ENCODE measurements at regions of chr16 and their contacts with region 1.

Region 1: DNA sequence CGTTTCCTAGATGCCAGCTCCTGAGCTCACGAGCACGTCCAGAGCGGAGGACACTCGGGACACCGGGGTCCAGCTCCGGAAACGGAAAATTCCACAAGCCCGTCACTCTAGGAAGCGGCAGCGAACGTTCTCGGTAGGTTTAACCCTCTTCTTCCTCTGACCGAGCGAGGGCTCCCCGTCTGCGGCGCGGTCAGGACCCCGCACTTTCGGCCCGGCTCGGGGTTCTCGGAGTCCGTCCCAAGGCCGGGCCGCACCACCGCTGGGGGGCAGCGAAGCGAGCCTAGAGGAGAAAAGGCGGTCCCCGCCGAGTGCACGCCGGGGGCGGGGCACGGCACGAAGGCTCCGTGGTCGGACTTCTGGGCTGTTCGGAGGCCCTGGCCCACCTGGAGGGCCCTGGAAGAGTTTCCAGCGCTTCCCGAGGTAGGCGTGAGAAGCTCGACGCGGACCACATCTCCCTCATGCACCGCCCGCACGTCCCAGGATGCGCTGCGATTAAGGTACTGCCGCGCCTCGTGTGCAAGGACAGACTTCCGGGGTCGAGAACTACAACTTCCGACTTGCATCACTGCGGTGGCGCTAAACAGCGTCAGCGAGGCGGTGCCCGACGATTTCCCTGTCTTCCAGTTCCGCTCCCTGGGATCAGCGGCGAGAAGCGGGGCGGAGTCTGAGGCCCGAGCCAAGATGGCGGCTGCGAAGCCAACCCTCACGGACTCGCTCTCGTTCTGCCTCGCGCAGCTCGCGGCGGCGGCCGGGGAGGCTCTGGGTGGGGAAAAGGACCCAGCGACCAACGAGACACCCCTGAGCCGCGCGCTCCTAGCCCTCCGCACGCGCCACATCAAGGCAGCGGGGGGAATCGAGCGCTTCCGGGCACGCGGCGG is at the start of gene ARMC5:
- DNase-seq: peak; percentile 90
- ATAC-seq: peak; percentile 80
- H3K4me3 ChIP-seq: peak within 1 kb of the TSS; percentile 95
- H3K27ac ChIP-seq: peak within 1 kb of the TSS; percentile 100
- H3K4me1 ChIP-seq: peaks cover 16% of the 10 kb centered on the region
- H3K27me3 ChIP-seq: no peaks in the 10 kb centered on the region
- CTCF ChIP-seq: peak; percentile 48 to 71 (median 67)
- EP300 ChIP-seq: 0 out of 4 replicates have a peak, but pooled peaks of 1 of the 2 experiments have one; percentile 9
- POLR2A ChIP-seq: peak; percentile 95
- RAD21 ChIP-seq: 0 out of 2 replicates have a peak, but pooled peaks have one; percentile 13
- polyA plus RNA-seq, gene ARMC5: 0.06 to 0.51 TPM

Region 2: DNA sequence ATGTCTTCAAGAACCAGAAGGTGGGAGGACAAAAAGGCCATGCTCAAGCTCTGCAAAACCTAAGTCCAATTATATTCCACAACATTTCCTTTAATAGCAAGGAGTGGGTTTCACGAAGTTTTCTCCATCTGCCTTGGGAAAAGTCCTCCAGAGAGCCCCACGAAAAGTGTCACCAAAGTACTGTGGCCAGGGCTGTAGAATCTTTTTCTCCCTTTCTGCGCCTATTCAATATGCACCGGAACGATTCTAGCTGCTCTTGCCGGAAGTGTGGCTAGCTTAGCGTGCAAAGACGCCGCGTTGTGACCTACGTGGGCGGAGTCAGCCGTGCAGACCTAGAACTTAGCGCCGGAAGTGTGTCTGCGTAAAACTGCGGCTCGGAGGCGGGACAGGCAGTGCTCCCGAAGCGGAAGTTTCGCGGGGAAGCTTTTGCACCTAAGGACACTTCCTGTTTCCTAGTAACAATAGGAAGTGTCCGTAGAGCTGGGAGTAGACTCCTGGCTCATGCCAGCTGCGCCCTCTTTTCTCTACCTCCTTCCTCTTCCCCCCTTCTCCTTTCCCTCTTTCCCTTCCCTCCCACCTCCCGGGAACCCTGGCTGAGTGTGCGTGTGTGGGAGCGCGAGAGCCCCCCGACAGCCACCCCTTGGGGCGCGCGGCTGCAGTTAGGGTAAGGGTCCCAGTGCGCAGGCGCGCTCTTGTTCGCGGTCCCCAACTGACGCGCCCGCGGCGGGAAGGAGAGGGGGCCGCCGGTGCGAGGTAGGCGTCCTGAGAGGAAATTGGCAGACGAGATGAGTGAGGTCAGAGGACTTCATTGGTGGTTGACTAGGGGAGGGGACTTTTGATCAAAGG is 384.9 kb before region 1 on chr16 and contains the starts of genes ZNF646 and ZNF668:
- CTCF ChIA-PET with region 1: interaction called, 10 read pairs
- POLR2A ChIA-PET with region 1: interaction called, 7 read pairs
- RAD21 ChIA-PET with region 1: interaction called, 6 read pairs
- SMC1A ChIA-PET with region 1: interaction called, 5 read pairs
- in situ Hi-C with region 1: no loop called
- intact Hi-C with region 1: no loop called
- DNase-seq: peak; percentile 96
- ATAC-seq: peak; percentile 84
- H3K4me3 ChIP-seq: peak within 1 kb of the TSS; percentile 86
- H3K27ac ChIP-seq: peak within 1 kb of the TSS; percentile 89
- H3K4me1 ChIP-seq: peaks cover 3% of the 10 kb centered on the region; the same call in 1 of the 2 replicates
- H3K27me3 ChIP-seq: no peaks in the 10 kb centered on the region
- CTCF ChIP-seq: no peak
- EP300 ChIP-seq: no peak
- POLR2A ChIP-seq: peak; percentile 87
- RAD21 ChIP-seq: no peak
- polyA plus RNA-seq, gene ZNF646: 0.10 to 0.26 TPM
- polyA plus RNA-seq, gene ZNF668: 0.05 TPM in 1 of 2 experiments, not detected in the other

Region 3: DNA sequence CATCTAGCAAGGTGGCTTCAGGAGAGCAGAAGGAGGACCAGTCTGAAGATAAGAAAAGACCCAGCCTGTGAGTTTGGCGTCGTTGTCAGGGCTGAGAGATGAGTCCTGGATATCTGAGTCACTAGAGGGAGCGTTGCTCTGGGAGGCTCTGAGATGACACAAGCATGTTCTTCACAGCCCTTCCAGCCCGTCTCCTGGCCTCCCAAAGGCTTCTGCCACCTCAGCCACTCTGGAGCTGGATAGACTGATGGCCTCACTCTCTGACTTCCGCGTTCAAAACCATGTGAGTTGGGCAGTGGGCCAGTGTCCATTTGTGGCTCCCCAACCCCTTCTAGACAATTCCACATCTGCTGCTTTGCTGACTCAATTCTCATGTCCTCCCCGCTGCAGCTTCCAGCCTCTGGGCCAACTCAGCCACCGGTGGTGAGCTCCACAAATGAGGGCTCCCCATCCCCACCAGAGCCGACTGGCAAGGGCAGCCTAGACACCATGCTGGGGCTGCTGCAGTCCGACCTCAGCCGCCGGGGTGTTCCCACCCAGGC is 15.2 kb after region 1 on chr16:
- CTCF ChIA-PET with region 1: interaction called, 13 read pairs
- POLR2A ChIA-PET with region 1: no interaction called
- RAD21 ChIA-PET with region 1: no interaction called
- SMC1A ChIA-PET with region 1: interaction called, 3 read pairs
- in situ Hi-C with region 1: no loop called
- intact Hi-C with region 1: no loop called
- DNase-seq: no peak
- ATAC-seq: no peak
- H3K4me3 ChIP-seq: no peak overlapping the region
- H3K27ac ChIP-seq: no peak overlapping the region
- H3K4me1 ChIP-seq: peaks cover 7% of the 10 kb centered on the region; the same call in 1 of the 2 replicates
- H3K27me3 ChIP-seq: peaks cover 0 to 9% of the 10 kb centered on the region in 2 experiments; a peak in 3 of 4 replicates
- CTCF ChIP-seq: no peak
- EP300 ChIP-seq: no peak
- POLR2A ChIP-seq: no peak
- RAD21 ChIP-seq: no peak

Region 4: DNA sequence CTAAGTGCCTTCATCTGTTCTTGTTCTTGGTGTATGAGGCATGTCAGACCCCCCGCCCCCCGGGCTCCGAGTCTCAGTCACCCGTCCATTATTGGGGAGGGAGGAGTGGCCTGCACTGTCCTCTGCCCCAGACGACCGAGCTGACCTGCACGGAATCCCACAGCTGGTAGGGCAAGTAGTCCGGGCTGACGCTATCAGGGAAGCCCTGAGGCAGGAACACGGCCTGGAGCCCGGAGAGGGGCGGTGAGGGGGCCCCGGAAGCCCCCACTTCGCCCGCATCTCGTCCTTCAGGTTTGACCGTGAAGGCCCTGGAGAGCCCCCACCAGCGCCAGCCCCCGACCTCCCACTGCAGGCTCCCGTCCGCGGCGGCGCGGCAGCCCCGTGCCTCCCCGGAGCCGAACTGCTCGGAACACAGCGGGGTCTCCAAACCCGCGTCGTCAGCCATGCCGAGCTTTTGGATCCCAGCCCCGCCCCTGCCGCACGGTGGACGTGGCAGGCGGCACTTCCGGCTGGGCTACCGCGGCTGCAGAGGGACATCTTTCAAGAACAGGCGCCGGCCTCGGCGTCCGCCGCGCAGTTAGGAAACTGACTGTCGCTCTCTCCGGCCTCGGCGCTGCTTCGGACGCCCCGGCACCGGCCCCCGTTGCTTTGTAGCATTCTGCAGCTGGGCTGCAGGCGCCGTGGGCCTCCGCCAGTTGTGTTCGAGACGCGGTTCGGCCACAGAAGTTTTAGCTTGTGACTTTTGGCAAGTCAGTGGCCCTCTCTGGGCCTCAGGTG is 49.0 kb after region 1 on chr16 and contains the start of gene RUSF1:
- CTCF ChIA-PET with region 1: interaction called, 25 read pairs
- POLR2A ChIA-PET with region 1: interaction called, 4 read pairs
- RAD21 ChIA-PET with region 1: interaction called, 3 read pairs
- SMC1A ChIA-PET with region 1: interaction called, 9 read pairs
- in situ Hi-C with region 1: no loop called
- intact Hi-C with region 1: loop called (anchors 5 kb)
- DNase-seq: peak; percentile 33
- ATAC-seq: peak; percentile 89
- H3K4me3 ChIP-seq: peak within 1 kb of the TSS; percentile 90
- H3K27ac ChIP-seq: peak within 1 kb of the TSS; percentile 92
- H3K4me1 ChIP-seq: peaks cover 14% of the 10 kb centered on the region
- H3K27me3 ChIP-seq: no peaks in the 10 kb centered on the region
- CTCF ChIP-seq: no peak
- EP300 ChIP-seq: no peak
- POLR2A ChIP-seq: peak; percentile 95
- RAD21 ChIP-seq: no peak
- polyA plus RNA-seq, gene RUSF1: 0.20 to 0.26 TPM

Region 5: GRCh38 chr16:31713071-31713944 is 254.2 kb after region 1 on chr16:
- CTCF ChIA-PET with region 1: interaction called, 9 read pairs
- POLR2A ChIA-PET with region 1: interaction called, 13 read pairs
- RAD21 ChIA-PET with region 1: interaction called, 6 read pairs
- SMC1A ChIA-PET with region 1: interaction called, 7 read pairs
- in situ Hi-C with region 1: no loop called
- intact Hi-C with region 1: no loop called
- DNase-seq: peak; percentile 79
- ATAC-seq: peak; percentile 94
- H3K4me3 ChIP-seq: peak overlapping the region; percentile 75
- H3K27ac ChIP-seq: peak overlapping the region; percentile 96
- H3K4me1 ChIP-seq: peaks cover 6% of the 10 kb centered on the region
- H3K27me3 ChIP-seq: no peaks in the 10 kb centered on the region
- CTCF ChIP-seq: no peak
- EP300 ChIP-seq: no peak
- POLR2A ChIP-seq: peak; percentile 97
- RAD21 ChIP-seq: no peak